Activated CD4-positive, alpha-beta memory T cell treated with anti-CD3 and anti-CD28 coated beads for 36 hours (primary cell): ENCODE measurements at regions of chr12 and their contacts with region 1.

Region 1: DNA sequence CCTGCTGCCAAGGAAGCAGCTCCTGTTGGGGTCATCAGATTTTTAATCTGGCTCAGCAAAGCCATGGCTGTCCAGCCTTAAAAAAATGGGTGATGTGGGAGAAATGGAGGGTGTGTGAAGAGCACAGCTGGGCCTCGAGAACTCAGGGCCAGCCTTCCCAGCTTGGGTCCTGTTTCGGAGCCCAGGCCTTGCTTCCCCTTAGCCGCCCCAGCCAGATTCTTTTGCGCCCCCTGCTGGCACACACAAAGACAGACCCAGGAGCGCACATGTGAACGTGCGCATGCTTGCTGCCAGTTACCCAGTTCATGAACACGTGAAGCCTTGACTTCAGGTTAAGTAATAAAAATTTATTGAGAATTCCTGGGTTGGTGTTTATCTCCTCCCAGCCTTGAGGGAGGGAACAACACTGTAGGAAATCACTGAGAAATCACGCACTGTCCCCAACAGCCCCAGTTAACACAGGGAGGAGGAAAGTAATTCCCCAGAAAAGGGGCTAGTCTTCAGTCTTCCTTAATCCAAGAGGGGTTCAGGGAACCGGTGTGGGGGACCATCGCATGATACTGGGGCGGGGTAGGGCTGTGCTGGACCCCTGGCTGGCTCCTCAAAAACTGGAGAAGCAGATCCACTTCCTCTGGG is 5.3 kb downstream of the PHB2 start:
- DNase-seq: peak; percentile 93
- H3K4me3 Mint-ChIP-seq: no peak overlapping the region
- H3K27ac Mint-ChIP-seq: peak overlapping the region; percentile 89
- H3K4me1 Mint-ChIP-seq: peaks cover 72% of the 10 kb centered on the region
- H3K27me3 Mint-ChIP-seq: no peaks in the 10 kb centered on the region

Region 2: DNA sequence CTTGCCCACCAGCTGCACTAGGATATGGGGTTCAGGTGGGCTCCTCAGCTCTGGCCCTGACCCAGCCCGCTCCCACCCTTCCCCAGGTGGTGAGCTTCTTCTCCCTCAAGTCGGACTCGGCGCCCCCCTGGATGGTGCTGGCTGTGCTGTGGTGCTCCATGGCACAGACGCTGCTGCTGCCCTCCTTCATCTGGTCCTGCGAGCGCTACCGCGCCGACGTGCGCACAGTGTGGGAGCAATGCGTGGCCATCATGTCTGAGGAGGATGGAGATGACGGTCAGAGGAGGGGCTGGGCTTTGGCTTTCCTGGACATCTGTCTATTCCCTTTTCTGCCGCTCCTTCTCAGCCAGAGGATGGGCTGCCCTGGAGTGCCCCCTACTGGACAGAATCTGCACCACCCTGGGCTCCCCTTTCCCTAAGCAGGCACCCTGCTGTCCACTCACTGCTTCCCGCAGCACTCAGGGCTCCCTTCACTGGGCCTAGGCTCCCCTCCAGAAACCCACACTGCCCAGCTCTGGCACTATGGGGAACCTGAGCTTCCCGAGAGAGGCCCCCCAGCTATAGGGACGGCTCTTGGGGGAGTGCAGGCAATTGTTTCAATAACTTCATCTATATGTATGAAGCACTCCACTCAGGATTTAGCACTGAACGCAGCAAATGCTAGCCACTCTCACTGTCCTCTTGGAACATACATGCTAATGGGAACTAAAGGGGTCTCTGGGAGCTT is 139.6 kb before region 1 on chr12:
- CTCF ChIA-PET with region 1: no interaction called
- POLR2A ChIA-PET with region 1: no interaction called
- intact Hi-C with region 1: no loop called
- DNase-seq: peak; percentile 90
- H3K4me3 Mint-ChIP-seq: no peak overlapping the region
- H3K27ac Mint-ChIP-seq: peak overlapping the region; percentile 16
- H3K4me1 Mint-ChIP-seq: peaks cover 30% of the 10 kb centered on the region
- H3K27me3 Mint-ChIP-seq: peaks cover 29% of the 10 kb centered on the region

Region 3: GRCh38 chr12:6914246-6914946 is 50.7 kb before region 1 on chr12 and contains the start of gene ENO2:
- CTCF ChIA-PET with region 1: interaction called, 3 read pairs
- POLR2A ChIA-PET with region 1: interaction called, 4 read pairs
- intact Hi-C with region 1: loop called (anchors 2 kb)
- DNase-seq: peak; percentile 88
- H3K4me3 Mint-ChIP-seq: peak within 1 kb of the TSS; percentile 92
- H3K27ac Mint-ChIP-seq: peak within 1 kb of the TSS; percentile 88
- H3K4me1 Mint-ChIP-seq: peaks cover 30% of the 10 kb centered on the region
- H3K27me3 Mint-ChIP-seq: no peaks in the 10 kb centered on the region
- total RNA-seq, gene ENO2: 185 to 193 TPM

Region 4: DNA sequence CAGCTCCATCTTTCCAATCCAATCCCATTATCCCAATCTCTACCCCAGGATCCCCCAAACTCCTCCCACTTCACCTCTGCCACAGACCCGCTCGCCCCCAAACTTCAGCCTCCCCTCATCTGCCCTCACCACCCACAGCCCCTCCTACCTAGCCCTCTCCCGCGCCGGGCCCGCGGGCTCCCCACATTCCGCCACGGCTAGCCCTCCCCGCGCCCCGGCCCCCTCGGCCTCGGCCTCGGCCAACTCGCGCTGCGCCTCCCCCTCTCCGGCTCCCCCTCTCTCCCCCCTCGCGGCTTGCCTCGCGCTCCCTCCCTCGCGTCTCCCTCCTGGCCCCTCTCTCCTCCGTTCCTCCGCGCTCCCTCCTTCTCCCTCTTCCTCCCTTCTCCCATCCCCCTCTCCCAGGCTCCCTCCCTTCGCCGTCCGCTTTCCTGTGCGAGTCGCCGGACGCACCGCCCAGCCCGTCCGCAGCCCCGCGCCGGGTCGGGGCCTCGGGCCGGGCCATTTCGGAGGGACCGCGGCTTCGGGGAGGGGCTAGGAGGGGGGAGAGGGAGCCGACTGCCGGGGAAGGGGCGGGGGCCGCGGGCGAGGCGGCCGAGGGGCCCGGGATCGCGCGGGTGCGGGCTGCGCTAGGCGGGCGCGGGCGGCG is 37.6 kb before region 1 on chr12 and contains the start of gene ATN1:
- CTCF ChIA-PET with region 1: interaction called, 29 read pairs
- POLR2A ChIA-PET with region 1: interaction called, 6 read pairs
- intact Hi-C with region 1: loop called (anchors 1 kb)
- DNase-seq: peak; percentile 61
- H3K4me3 Mint-ChIP-seq: peak within 1 kb of the TSS; percentile 84
- H3K27ac Mint-ChIP-seq: peak within 1 kb of the TSS; percentile 89
- H3K4me1 Mint-ChIP-seq: peaks cover 64% of the 10 kb centered on the region
- H3K27me3 Mint-ChIP-seq: no peaks in the 10 kb centered on the region
- total RNA-seq, gene ATN1: 34.8 to 37.8 TPM

Region 5: DNA sequence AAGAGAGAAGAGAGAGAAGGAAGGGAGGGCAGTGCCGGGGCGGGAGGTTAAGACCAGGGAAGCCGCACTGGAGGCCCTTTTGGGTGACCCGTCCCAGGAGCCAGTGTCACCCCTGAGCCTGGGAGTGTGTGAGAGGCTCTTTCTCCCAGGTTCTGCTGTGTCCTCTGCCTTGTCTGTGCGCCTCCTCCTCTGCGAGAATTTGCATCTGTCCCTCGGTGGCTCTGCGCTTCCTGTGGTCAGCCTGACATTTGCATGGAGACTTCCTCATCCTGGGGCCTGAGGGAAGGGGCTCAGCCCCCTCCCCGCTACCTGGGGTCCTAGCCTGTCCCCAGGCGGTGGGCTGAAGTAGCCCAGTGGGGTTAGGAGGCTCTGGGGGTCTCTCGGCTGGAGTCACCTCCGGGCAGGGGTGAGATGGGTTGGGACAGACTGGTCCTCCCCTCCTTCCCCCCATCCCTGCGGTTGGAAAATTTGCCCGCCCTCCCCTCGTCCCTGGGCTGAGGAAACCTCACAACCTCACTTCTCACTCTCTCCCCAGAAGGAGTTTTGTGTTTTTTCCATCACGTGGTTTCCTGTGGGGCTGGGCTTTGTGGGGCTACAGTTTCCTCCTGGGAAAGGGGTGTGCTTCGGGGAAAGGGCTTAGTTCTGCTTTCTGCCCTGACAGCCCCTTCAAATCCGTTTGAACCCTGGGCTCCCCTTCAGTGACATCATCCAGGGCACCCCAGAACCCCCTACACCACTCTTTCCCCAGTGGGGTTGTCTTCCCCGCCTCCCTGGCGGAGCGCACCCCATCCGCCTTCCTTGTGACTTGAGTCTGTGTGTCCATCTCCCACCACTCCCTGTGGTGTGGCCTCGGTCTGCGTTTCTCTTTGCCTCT is 11.5 kb before region 1 on chr12:
- CTCF ChIA-PET with region 1: interaction called, 586 read pairs
- POLR2A ChIA-PET with region 1: interaction called, 507 read pairs
- intact Hi-C with region 1: loop called (anchors 1 kb)
- DNase-seq: peak; percentile 91
- H3K4me3 Mint-ChIP-seq: peak overlapping the region; percentile 98
- H3K27ac Mint-ChIP-seq: peak overlapping the region; percentile 97
- H3K4me1 Mint-ChIP-seq: peaks cover 71% of the 10 kb centered on the region
- H3K27me3 Mint-ChIP-seq: no peaks in the 10 kb centered on the region

Region 6: GRCh38 chr12:7092229-7092985 is 127.3 kb after region 1 on chr12 and contains the start of gene C1R:
- CTCF ChIA-PET with region 1: no interaction called
- POLR2A ChIA-PET with region 1: no interaction called
- intact Hi-C with region 1: loop called (anchors 5 kb)
- DNase-seq: peak; percentile 79
- H3K4me3 Mint-ChIP-seq: peak within 1 kb of the TSS; percentile 76
- H3K27ac Mint-ChIP-seq: no peak within 1 kb of the TSS
- H3K4me1 Mint-ChIP-seq: peaks cover 7% of the 10 kb centered on the region
- H3K27me3 Mint-ChIP-seq: no peaks in the 10 kb centered on the region
- total RNA-seq, gene C1R: 1.4 to 2.2 TPM

Region 7: DNA sequence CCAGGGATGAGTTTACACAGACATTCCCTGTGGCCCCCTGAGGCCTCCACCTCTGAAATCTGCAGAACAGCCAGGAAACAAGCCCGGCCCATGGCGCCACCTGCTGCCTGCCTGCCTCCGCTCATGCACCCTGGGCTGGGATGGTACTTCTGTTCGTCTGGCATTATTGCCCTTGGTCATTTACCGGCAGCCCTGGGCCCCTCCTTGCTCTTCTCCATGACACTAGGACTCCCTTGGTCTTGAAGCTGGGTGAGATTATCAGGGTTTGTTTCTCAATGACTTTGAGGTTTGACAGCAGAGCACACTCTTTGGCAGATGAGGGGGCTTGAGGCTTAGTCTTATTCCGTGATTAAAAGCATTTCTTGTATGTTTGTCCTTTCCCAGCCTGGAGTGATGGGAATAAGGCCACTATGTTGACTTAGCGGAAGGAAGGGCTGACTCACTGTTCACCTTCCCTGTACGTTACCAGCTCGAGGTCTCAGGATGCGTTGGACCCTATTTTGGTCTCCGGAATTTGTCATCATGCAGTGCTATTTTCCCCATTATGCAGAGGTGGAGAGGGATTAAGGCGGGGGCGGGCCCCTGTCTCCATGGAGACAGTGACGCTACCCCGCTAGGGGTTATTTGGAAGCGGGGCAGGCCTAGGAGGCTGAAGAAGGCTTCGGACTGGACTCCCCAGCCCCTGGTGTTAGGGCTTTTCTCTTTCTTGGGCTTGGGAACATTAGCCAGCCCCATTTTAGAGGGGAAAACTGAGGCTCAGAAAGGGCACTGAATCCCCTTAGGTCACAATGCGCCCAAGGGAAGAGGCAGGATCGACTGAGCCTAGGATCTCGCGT is 223.6 kb after region 1 on chr12:
- CTCF ChIA-PET with region 1: no interaction called
- POLR2A ChIA-PET with region 1: no interaction called
- intact Hi-C with region 1: loop called (anchors 5 kb)
- DNase-seq: peak; percentile 86
- H3K4me3 Mint-ChIP-seq: peak overlapping the region; percentile 86
- H3K27ac Mint-ChIP-seq: peak overlapping the region; percentile 94
- H3K4me1 Mint-ChIP-seq: peaks cover 39% of the 10 kb centered on the region
- H3K27me3 Mint-ChIP-seq: no peaks in the 10 kb centered on the region